ENCODE measurements at regions of chr1 and their contacts with region 1.

Region 1: GRCh38 chr1:84620720-84621313 is 46.6 kb upstream of the CTBS start:
- DNase-seq: peak; percentile 65 to 79
- ATAC-seq: peak; percentile 93 to 97 (median 94)
- H3K4me3 ChIP-seq: peak overlapping the region; percentile 39 to 84 (median 67)
- H3K27ac ChIP-seq: peak overlapping the region in 7 of 10 donors; percentile 14 to 80 (median 59)
- H3K4me1 ChIP-seq: peaks cover 0 to 26% (median 5%) of the 10 kb centered on the region in 9 donors
- H3K27me3 ChIP-seq: no peaks in the 10 kb centered on the region
- CTCF ChIP-seq: peak; percentile 93 to 99 (median 97)

Region 2: DNA sequence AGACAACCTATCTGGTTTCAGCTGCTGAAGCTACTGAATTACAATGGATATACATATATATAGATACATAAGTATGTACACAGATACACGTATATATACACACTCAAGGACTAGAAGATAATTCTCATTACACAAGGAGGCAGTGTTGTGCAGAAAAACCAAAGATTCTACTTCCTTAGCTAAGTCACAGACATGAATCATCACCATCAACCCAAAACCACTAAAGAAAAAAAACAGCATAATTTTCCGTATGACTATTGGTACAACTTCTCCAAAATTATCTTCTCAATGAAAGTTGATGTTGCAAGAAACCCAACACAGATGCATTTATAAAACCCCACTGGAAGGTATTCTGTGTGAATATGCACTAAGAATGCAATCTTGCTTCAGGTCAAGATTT is 178.6 kb before region 1 on chr1:
- intact Hi-C with region 1: loop called in 5 of 10 experiments (anchors 5 kb)
- DNase-seq: peak in 1 of 2 donors; percentile 13
- ATAC-seq: peak in 7 of 8 donors; percentile 58 to 89 (median 83)
- H3K4me3 ChIP-seq: no peak overlapping the region
- H3K27ac ChIP-seq: peak overlapping the region in 1 of 10 donors; percentile 31
- H3K4me1 ChIP-seq: peaks cover 0 to 24% (median 1%) of the 10 kb centered on the region in 9 donors
- H3K27me3 ChIP-seq: peaks cover 0 to 9% (median 0%) of the 10 kb centered on the region in 7 donors
- CTCF ChIP-seq: peak in 8 of 9 donors; percentile 18 to 67 (median 54)

Region 3: DNA sequence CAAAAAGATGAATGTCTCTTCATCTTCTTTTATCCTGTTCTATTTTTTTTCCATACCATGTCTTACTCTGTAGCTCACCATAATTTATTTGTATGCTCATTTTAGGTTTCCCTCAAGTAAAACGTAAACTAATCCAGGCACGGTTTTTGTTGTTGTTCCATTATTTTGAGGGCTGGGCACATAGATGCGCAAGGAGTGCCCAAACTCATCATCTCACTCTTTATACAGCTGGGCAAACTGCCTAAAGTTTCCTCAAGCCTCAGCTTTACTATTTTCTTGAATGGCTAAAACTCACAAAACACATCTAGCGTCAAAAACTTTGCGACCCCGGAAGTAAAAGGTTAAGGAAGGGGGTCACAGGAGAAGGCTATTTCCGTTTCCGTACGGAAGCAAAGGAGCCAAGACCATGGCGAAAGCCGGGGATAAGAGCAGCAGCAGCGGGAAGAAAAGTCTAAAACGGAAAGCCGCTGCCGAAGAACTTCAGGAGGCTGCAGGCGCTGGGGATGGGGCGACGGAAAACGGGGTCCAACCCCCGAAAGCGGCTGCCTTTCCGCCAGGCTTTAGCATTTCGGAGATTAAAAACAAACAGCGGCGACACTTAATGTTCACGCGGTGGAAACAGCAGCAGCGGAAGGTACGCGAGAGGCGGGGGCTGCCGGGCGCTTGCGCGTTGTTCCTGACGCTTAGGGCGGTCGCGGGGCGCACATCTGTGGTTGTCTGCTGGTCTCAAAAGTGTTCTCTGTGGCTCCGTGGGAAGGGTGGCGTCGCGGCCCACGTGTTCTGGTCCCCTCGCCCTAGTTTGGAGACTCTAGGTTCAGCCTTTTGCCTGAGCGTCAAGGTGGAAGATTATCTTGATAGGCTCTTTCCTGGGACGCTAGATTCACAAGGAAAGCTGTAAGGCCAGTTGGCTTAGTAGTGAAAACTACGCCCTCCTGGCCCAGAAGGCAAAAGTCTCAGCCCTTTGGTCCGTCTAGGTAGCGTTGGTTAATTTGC is 141.6 kb before region 1 on chr1 and contains the start of gene RPF1:
- intact Hi-C with region 1: loop called in 1 of 10 experiments (anchors 10 kb)
- DNase-seq: peak; percentile 71 to 74
- ATAC-seq: peak; percentile 95 to 98 (median 97)
- H3K4me3 ChIP-seq: peak within 1 kb of the TSS; percentile 54 to 88 (median 78)
- H3K27ac ChIP-seq: peak within 1 kb of the TSS; percentile 9 to 94 (median 86)
- H3K4me1 ChIP-seq: peaks cover 0 to 35% (median 23%) of the 10 kb centered on the region in 9 donors
- H3K27me3 ChIP-seq: peaks cover 0 to 42% (median 36%) of the 10 kb centered on the region in 7 donors
- CTCF ChIP-seq: no peak
- total RNA-seq, gene RPF1: 28.0 to 38.9 (median 32.0) TPM

Region 4: DNA sequence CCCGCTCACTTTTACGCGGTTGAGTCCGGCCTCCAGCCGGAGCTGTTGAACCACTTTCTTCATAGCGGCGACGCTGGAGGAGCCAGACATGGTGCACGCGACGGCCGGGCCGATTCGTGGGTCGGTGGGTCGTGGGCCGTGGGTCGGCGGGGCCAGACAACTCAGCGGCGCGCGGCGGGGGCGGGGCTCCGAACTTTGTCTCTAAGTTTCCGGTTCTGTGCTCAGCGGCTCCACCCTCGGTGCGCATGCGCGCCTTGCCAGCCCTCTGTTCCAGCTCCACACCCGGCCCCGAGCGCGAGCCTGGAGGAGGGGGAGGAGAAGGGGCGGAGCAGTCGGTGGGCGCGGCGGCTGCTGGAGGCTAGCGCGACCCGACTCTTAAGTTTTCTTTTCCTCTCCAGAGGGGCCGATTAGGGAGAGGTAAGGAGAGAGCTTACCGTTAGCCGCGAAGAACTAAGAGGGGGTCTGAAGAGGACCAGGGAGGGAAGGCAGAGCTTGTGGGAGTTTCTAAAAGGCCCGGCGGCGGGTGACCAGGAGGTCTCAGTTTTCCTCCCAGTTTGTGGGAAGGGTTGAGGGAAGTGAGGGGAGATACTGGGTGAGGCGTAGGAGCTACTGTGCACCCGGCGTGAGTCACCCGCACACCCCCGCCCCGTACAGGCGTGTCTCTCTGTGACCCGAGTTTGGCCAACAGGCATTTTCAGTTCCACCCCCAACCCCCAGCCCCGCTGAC is 114.7 kb before region 1 on chr1 and contains the starts of genes GNG5 and SPATA1:
- intact Hi-C with region 1: loop called in 2 of 10 experiments (anchors 5 kb)
- DNase-seq: peak; percentile 98 to 99
- ATAC-seq: peak; percentile 96 to 98 (median 98)
- H3K4me3 ChIP-seq: peak within 1 kb of the TSS; percentile 51 to 91 (median 74)
- H3K27ac ChIP-seq: peak within 1 kb of the TSS; percentile 93 to 99 (median 98)
- H3K4me1 ChIP-seq: peaks cover 0 to 48% (median 42%) of the 10 kb centered on the region in 9 donors
- H3K27me3 ChIP-seq: no peaks in the 10 kb centered on the region
- CTCF ChIP-seq: no peak
- total RNA-seq, gene GNG5: 155 to 216 (median 164) TPM
- total RNA-seq, gene SPATA1: 0.78 to 2.9 (median 1.6) TPM

Region 5: DNA sequence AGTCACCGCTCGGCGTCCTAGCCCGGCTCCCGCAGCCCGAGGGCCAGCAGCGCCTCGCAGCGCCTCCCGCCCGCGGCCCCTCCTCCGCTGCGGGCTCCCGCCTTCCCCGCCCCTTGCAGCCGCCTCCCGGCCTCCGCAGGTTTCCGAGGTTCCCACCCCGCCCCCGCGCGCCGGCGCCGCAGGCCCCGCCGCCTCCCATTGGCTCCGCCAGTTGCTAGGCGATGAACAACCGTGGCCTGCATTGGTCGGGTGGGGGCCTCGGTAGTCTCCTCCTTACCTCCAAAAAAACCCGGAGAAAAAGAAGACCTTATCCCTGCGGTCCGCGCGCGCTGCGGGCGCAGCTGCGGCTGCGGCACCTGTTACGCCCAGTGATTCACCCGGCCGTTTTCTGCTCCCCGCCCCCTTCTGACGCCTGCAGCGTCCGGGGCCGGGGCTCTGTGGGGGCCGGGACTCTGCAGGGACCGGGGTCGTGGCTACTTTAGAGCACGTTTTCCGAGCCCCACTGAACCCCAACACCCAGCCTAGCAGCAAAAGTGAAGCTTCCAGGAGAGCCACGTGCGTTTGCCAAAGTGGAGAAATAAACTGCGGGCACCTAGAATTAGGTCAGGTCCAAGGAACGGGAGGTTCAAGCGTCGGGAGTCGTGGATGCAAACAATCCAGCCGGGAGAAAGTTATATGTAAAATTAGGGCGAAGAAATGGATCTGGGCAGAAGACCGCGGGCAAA is 69.7 kb after region 1 on chr1 and contains the start of gene SSX2IP:
- intact Hi-C with region 1: loop called in 2 of 10 experiments (anchors 10 kb)
- DNase-seq: peak; percentile 98 to 99
- ATAC-seq: peak; percentile 98 to 99 (median 99)
- H3K4me3 ChIP-seq: peak within 1 kb of the TSS; percentile 52 to 96 (median 84)
- H3K27ac ChIP-seq: peak within 1 kb of the TSS in 9 of 10 donors; percentile 73 to 87 (median 82)
- H3K4me1 ChIP-seq: peaks cover 0 to 38% (median 12%) of the 10 kb centered on the region in 9 donors
- H3K27me3 ChIP-seq: no peaks in the 10 kb centered on the region
- CTCF ChIP-seq: no peak
- total RNA-seq, gene SSX2IP: 6.3 to 14.9 (median 11.2) TPM

Region 6: DNA sequence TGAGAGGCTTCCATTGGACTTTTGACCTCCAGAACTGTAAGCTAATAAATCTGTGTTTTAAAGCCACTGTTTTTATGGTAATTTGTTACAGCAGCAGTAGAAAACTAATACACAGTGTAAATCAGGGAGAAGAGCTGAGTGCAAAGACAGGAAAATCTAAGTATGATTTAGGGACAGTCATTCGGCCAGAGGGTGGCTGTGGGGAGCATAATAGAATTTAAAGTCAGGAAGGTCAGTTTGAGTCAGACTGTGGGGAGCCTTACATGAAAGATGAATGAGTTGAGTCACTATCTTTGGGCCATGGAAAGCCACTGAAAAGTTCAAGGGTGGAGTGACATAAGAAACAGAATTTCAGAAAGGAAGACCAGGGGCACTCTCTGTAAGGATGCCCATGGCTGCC is 121.8 kb after region 1 on chr1:
- intact Hi-C with region 1: loop called in 2 of 10 experiments (anchors 10 kb)
- DNase-seq: no peak
- ATAC-seq: no peak
- H3K4me3 ChIP-seq: no peak overlapping the region
- H3K27ac ChIP-seq: no peak overlapping the region
- H3K4me1 ChIP-seq: no peaks in the 10 kb centered on the region
- H3K27me3 ChIP-seq: peaks cover 0 to 6% (median 0%) of the 10 kb centered on the region in 7 donors
- CTCF ChIP-seq: no peak

Measured in heart right ventricle (tissue), 16 donors.